Mammary epithelial cell (primary cell): ENCODE measurements at regions of chr21 and their contacts with region 1.

Region 1: GRCh38 chr21:36218691-36219090 is 62.1 kb downstream of the DOP1B start:
- DNase-seq: no peak
- H3K4me3 ChIP-seq: no peak overlapping the region
- H3K27ac ChIP-seq: no peak overlapping the region
- H3K4me1 ChIP-seq: no peaks in the 10 kb centered on the region
- H3K27me3 ChIP-seq: no peaks in the 10 kb centered on the region
- CTCF ChIP-seq: no peak

Region 2: DNA sequence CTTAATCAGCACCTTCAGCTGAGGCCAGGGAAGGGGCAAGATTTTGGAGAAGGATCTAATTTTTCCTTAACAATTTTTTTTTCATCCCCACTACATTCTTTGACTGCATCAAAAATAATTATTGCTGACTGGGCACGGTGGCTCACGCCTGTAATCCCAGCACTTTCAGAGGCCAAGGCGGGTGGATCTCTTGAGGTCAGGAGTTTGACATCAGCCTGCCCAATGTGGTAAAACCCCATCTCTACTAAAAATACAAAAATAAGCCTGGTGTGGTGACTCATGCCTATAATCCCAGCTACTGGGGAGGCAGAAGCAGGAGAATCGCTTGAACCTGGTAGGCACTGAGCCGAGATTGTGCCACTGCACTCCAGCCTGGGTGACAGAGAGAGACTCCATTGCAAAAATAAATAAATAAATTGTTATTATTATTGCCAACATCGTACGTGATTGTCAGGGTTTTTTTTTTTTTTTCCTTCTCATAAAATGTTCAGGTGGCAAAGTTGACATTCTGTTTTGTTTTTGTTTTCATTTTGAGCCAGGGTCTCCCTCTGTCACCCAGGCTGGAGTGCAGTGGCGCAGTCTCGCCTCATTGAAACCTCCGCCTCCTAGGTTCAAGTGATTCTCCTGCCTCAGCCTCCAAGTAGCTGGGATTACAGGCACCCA is 64.0 kb after region 1 on chr21:
- CTCF ChIA-PET with region 1: no interaction called
- dilution Hi-C with region 1: loop called (anchors 5 kb)
- in situ Hi-C with region 1: no loop called
- intact Hi-C with region 1: no loop called
- DNase-seq: peak; percentile 21
- H3K4me3 ChIP-seq: no peak overlapping the region
- H3K27ac ChIP-seq: no peak overlapping the region
- H3K4me1 ChIP-seq: no peaks in the 10 kb centered on the region
- H3K27me3 ChIP-seq: no peaks in the 10 kb centered on the region
- CTCF ChIP-seq: no peak